Pancreas (tissue), 10 donors: ENCODE measurements at regions of chr14 and their contacts with region 1.

Region 1: DNA sequence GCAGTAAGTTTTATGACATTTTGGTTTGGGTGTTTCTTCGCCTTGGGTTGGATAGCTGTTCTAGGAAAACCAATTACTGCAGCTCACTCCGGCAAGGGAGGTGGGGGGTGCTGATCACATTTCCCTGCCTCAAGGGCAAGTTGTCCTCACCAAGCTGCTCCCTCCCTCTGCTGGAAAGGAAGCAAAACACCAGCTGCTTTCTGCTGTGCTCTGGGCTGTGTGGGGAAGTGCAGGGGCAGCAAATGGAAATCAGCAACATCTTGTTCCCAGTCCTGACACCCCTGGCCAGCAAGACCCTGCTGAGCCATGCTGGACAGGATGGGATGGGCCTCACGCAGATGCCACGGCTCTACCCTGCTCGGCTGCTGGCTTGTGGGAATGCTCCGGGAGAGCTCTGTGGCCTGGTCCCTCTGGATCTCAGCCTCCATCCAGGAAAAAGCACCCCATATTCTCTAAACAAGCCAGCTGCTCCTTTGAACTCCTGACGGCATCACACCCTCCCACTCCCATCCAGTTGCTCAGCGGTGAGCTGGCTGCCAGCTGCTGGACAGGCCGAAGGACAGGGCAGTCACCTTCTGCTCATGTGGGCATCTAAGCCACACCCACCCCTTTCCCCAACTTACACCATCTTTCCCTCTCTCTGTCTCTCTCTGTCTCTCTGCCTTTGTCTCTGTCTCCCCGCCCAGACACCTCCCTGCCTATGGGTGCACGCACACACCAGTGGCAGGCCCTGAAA is 52.4 kb upstream of the EIF5 start:
- DNase-seq: no peak
- ATAC-seq: peak; percentile 32 to 82 (median 70)
- H3K4me3 ChIP-seq: no peak overlapping the region
- H3K27ac ChIP-seq: no peak overlapping the region
- H3K4me1 ChIP-seq: no peaks in the 10 kb centered on the region
- H3K27me3 ChIP-seq: peaks cover 0 to 10% (median 3%) of the 10 kb centered on the region in 4 donors
- CTCF ChIP-seq: peak in 1 of 4 donors; percentile 9

Region 2: GRCh38 chr14:103085106-103086091 is 196.3 kb before region 1 on chr14:
- intact Hi-C with region 1: loop called in 1 of 3 experiments (anchors 10 kb)
- DNase-seq: peak in 3 of 6 donors; percentile 27 to 61 (median 57)
- ATAC-seq: no peak
- H3K4me3 ChIP-seq: no peak overlapping the region
- H3K27ac ChIP-seq: no peak overlapping the region
- H3K4me1 ChIP-seq: no peaks in the 10 kb centered on the region
- H3K27me3 ChIP-seq: no peaks in the 10 kb centered on the region
- CTCF ChIP-seq: no peak